SK-N-SH (cell line): ENCODE measurements at regions of chr12 and their contacts with region 1.

Region 1: DNA sequence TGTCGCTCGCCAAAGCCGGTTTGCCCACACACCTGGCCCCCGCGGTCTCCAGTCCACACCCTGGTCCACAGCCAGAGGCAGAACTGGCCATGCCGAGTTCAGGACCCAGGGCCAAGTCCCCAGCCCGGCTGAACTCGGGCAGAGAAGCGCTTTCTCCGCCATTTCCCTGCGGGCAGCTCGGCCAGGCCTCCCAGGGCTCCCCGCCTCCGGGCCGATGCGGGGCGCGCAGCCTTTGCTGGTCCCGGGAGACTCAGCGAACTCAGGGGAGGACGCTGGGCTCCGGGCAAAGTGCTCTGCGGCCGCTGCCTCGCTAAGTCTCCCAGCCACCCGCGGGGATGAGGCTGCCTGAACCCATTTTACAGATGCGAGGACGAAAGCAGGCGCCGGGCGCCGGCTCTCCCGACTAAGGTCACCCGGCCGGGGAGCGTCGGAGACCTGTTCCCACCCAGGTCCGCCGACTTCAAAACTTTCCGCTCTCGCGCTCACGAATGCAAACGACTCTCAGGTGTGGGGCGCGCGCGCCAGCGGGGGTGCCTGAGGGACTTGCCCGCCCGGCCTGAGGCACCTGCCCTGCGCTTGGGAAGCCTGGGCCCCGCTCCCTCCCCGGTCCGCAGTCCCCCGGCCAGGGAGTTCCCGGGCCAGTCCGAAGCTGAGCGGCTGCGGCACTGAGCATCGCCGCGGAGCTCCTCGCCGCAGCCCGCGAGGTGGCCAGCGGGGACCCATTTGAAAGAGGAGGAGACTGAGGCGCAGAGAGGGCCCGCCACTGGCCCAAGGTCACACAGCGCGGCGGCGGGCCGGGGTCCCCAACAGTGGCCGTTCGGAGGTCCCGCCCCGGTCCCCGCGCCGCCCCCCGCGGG is 627 bp downstream of the TESC start:
- DNase-seq: peak; percentile 67
- H3K4me3 ChIP-seq: peak overlapping the region; percentile 54 to 57
- H3K27ac ChIP-seq: no peak overlapping the region
- H3K4me1 ChIP-seq: peaks cover 5 to 10% of the 10 kb centered on the region in 2 experiments; a peak in 2 of 4 replicates
- H3K27me3 ChIP-seq: peaks cover 59% of the 10 kb centered on the region
- CTCF ChIP-seq: no peak
- EP300 ChIP-seq: no peak
- RAD21 ChIP-seq: no peak

Region 2: GRCh38 chr12:117025481-117026151 is 73.0 kb before region 1 on chr12:
- CTCF ChIA-PET with region 1: interaction called, 13 read pairs
- POLR2A ChIA-PET with region 1: no interaction called
- DNase-seq: peak; percentile 87
- H3K4me3 ChIP-seq: no peak overlapping the region; a peak in 1 of 4 replicates
- H3K27ac ChIP-seq: peak overlapping the region in 1 of 2 experiments; percentile 51; a peak in 1 of 4 replicates
- H3K4me1 ChIP-seq: peaks cover 0 to 19% of the 10 kb centered on the region in 2 experiments; a peak in 1 of 4 replicates
- H3K27me3 ChIP-seq: no peaks in the 10 kb centered on the region
- CTCF ChIP-seq: peak; percentile 86
- EP300 ChIP-seq: no peak
- RAD21 ChIP-seq: peak; percentile 90